ENCODE measurements at regions of chr3 and their contacts with region 1.

Region 1: DNA sequence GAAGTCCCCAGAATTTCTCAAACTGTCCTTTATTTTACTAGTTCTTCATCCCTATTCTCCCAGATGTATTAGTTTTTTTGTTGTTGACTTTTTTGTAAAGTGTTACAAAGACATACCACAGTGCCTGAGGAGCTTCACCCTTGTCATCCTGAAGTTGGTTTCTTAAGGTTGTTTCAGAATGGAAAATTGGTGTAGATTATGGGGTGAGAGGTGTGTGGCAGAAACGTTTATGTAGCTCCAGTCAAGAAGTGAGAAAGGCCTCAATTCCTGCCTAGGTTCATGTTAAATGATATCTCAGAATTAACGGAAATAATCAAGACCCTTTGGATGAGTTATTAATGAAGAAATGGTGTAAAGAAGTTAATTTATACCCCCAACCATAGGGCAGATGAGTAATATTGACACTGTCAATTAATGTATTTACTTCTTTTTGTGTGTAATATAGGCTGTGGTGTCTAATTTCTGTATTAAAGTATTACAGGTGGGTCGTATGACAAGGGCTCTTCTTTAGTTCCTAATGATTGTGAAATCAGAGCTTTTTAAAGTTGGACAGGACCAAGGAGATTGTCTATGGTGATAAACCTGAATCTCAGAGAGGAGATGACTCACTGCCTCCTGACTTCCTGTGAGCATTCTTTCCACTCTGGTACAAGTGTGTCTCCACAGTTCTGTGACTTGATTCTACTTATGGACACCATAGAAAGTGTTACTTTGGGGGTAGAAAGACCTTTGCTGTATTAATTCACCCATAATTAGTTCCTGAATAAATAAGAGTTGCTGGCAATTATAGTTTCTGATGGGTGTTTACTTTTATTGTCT is 7.0 kb downstream of the EDEM1 start:
- DNase-seq: peak; percentile 48
- ATAC-seq: peak; percentile 56
- H3K4me3 ChIP-seq: no peak overlapping the region
- H3K4me3 Mint-ChIP-seq: peak overlapping the region; percentile 66
- H3K27ac ChIP-seq: peak overlapping the region; percentile 81 to 97
- H3K27ac Mint-ChIP-seq: peak overlapping the region; percentile 82
- H3K4me1 ChIP-seq: peaks cover 86 to 91% of the 10 kb centered on the region in 2 donors
- H3K4me1 Mint-ChIP-seq: peaks cover 87% of the 10 kb centered on the region
- H3K27me3 ChIP-seq: no peaks in the 10 kb centered on the region
- H3K27me3 Mint-ChIP-seq: no peaks in the 10 kb centered on the region
- CTCF ChIP-seq: no peak

Region 2: GRCh38 chr3:5045961-5046360 is 148.6 kb before region 1 on chr3:
- CTCF ChIA-PET with region 1: no interaction called
- POLR2A ChIA-PET with region 1: no interaction called
- intact Hi-C with region 1: no loop called
- DNase-seq: no peak
- ATAC-seq: no peak
- H3K4me3 ChIP-seq: no peak overlapping the region
- H3K4me3 Mint-ChIP-seq: no peak overlapping the region
- H3K27ac ChIP-seq: no peak overlapping the region
- H3K27ac Mint-ChIP-seq: no peak overlapping the region
- H3K4me1 ChIP-seq: no peaks in the 10 kb centered on the region
- H3K4me1 Mint-ChIP-seq: no peaks in the 10 kb centered on the region
- H3K27me3 ChIP-seq: no peaks in the 10 kb centered on the region
- H3K27me3 Mint-ChIP-seq: no peaks in the 10 kb centered on the region
- CTCF ChIP-seq: no peak

Region 3: GRCh38 chr3:5181469-5182141 is 12.9 kb before region 1 on chr3:
- CTCF ChIA-PET with region 1: interaction called, 13 read pairs
- POLR2A ChIA-PET with region 1: interaction called, 58 read pairs
- intact Hi-C with region 1: loop called (anchors 2 kb)
- DNase-seq: peak; percentile 83
- ATAC-seq: peak; percentile 91
- H3K4me3 ChIP-seq: peak overlapping the region in 2 of 5 experiments; percentile 23 to 48
- H3K4me3 Mint-ChIP-seq: peak overlapping the region; percentile 81
- H3K27ac ChIP-seq: peak overlapping the region; percentile 80 to 86
- H3K27ac Mint-ChIP-seq: peak overlapping the region; percentile 94
- H3K4me1 ChIP-seq: peaks cover 83 to 90% of the 10 kb centered on the region in 2 donors
- H3K4me1 Mint-ChIP-seq: peaks cover 87% of the 10 kb centered on the region
- H3K27me3 ChIP-seq: no peaks in the 10 kb centered on the region
- H3K27me3 Mint-ChIP-seq: no peaks in the 10 kb centered on the region
- CTCF ChIP-seq: no peak

Region 4: GRCh38 chr3:5229414-5229813 is 34.9 kb after region 1 on chr3:
- CTCF ChIA-PET with region 1: no interaction called
- POLR2A ChIA-PET with region 1: no interaction called
- intact Hi-C with region 1: no loop called
- DNase-seq: no peak
- ATAC-seq: no peak
- H3K4me3 ChIP-seq: no peak overlapping the region
- H3K4me3 Mint-ChIP-seq: no peak overlapping the region
- H3K27ac ChIP-seq: no peak overlapping the region
- H3K27ac Mint-ChIP-seq: no peak overlapping the region
- H3K4me1 ChIP-seq: peaks cover 5 to 6% of the 10 kb centered on the region in 2 donors
- H3K4me1 Mint-ChIP-seq: peaks cover 5% of the 10 kb centered on the region
- H3K27me3 ChIP-seq: no peaks in the 10 kb centered on the region
- H3K27me3 Mint-ChIP-seq: no peaks in the 10 kb centered on the region
- CTCF ChIP-seq: no peak

Region 5: GRCh38 chr3:5264087-5264600 is 69.6 kb after region 1 on chr3:
- CTCF ChIA-PET with region 1: no interaction called
- POLR2A ChIA-PET with region 1: no interaction called
- intact Hi-C with region 1: no loop called
- DNase-seq: no peak
- ATAC-seq: no peak
- H3K4me3 ChIP-seq: no peak overlapping the region
- H3K4me3 Mint-ChIP-seq: no peak overlapping the region
- H3K27ac ChIP-seq: no peak overlapping the region
- H3K27ac Mint-ChIP-seq: no peak overlapping the region
- H3K4me1 ChIP-seq: peaks cover 25 to 30% of the 10 kb centered on the region in 2 donors
- H3K4me1 Mint-ChIP-seq: peaks cover 32% of the 10 kb centered on the region
- H3K27me3 ChIP-seq: no peaks in the 10 kb centered on the region
- H3K27me3 Mint-ChIP-seq: no peaks in the 10 kb centered on the region
- CTCF ChIP-seq: no peak

Measured in B cell (primary cell).